GM10248 (cell line): ENCODE measurements at regions of chr5 and their contacts with region 1.

Region 1: GRCh38 chr5:151126199-151126645 is 31.4 kb downstream of the ANXA6 start:
- DNase-seq: peak; percentile 73
- CTCF ChIP-seq: peak; percentile 94

Region 2: DNA sequence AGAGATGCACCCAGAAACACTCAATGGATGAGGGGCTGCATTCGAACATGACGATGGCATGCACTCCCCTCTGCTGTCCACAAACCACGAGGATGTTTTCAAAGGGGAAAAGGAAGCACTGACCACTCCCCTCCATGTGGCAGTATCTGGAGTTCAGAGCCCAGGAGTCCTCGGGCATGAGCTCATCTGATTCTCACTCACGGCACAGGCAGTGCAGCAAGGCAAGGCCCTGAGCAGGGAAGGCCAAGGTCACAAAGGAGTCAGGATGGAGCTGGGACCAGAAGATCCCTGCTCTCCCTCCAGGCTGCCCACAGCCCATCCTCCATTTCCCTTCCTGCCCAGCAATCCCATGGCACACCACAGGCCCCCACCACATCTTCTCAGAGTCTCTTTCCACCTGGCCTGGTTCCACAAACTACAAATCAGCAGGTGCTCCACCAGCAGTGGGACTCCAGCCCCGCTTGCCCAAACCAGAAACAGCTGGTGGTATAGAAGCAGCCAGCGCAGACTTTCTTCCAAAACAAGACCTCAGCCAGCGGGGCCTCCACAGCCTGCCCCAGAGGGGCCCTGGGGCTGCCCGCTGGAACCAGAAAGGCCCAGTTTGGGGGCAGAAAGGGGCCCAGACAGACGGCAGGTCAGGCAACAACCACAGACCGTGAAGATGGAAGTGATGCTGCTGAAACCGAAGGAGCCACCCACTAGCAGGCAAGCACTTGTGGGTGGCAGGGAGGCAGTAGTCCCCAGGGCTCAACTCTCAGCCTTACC is 57.6 kb before region 1 on chr5:
- CTCF ChIA-PET with region 1: interaction called, 22 read pairs
- POLR2A ChIA-PET with region 1: no interaction called
- DNase-seq: peak; percentile 45
- CTCF ChIP-seq: no peak

Region 3: DNA sequence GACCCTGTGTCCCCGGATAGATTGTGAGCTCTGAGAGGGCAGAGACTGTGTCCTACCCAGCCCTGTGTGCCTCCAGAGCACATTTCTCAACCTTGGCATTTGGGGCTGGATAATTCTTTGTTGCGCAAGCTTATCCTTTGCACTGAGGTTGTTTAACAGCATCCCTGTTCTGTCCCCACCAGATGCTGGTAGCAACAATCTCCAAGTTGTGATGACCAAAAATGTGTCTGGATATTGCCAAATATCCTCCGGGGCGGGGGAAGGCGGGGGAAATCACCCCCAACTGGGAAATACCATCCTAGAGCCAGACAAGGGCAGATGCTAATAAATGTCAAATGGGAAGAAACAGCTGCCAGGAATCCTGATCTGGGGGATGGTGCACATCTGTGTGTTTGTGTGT is 21.4 kb before region 1 on chr5:
- CTCF ChIA-PET with region 1: interaction called, 32 read pairs
- POLR2A ChIA-PET with region 1: interaction called, 6 read pairs
- DNase-seq: no peak
- CTCF ChIP-seq: no peak

Region 4: DNA sequence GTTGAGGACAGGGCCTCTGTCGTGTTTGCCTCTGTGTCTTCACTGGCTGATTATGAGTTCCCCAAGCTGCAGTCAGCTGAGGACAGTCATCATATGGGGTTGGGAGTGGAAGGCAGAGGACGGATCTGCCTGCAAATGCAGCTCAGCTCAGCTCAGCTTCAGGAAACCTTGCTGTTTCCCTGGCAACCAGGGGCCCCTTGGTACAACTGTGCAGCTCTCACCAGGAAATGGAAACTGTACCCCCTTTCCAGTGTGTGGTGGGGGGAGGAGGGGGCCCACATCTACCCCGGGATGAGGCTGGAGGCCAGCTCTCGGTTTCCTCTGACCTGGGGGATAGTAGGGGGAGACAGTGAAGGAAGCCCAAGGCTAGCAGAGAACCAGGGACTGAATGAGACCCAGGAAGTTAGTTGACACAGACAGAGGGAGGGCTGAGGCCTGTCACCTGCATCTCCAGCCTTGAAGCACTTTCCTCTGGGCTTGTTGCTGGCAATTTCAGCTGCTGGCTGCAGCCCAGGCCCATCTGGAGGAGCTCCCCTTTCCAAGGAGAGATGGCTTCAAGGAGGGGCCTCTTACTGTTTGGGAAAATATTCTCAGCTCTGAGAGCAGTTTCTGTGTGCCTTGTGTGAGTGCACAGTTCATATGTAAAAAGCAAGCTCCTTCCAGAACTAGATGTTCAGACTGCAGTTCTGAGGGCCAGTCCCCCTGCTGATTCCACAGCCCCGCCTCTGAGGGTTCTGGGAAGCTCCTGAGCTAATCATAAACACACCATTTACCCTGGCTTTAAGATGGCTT is 24.4 kb after region 1 on chr5:
- CTCF ChIA-PET with region 1: interaction called, 221 read pairs
- POLR2A ChIA-PET with region 1: interaction called, 12 read pairs
- DNase-seq: peak; percentile 54
- CTCF ChIP-seq: no peak

Region 5: DNA sequence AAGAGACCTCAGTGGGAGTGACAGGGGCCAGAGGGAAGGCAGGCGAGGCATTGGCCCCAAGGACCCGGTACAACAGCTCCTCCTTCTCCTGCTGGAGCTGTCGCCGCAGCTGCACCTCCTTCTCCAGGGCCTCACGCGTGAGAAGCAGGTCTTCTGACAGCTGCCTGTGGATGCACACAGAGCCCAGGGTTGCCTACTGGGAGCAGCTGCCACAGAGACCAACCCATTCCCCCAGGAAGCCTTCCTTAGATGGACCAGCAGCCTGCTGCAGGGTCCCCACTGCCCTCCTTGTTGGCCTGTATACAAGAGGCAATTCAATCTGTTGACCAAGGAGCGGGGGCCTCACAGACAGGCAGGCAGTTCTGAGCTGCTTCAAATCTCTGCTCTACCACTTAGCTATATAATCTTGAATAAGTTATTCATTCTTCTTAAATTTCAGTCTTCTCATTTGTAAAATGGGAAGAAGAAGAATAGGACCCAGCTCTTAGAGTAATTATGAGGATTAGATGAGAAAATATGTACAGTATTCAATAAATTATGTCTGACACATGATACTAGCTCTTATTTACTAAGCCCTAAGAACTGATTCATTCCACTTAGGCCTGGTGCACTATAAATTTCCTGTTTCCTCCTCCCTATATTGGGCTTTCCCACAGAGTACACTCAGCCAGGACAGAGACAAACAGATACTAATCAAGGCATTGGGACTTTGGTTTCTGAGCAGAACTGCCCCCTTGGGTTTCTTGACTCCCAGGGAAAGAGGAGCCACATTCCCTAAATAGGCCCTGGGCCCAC is 57.4 kb after region 1 on chr5:
- CTCF ChIA-PET with region 1: interaction called, 12 read pairs
- POLR2A ChIA-PET with region 1: no interaction called
- DNase-seq: no peak
- CTCF ChIP-seq: no peak

Region 6: DNA sequence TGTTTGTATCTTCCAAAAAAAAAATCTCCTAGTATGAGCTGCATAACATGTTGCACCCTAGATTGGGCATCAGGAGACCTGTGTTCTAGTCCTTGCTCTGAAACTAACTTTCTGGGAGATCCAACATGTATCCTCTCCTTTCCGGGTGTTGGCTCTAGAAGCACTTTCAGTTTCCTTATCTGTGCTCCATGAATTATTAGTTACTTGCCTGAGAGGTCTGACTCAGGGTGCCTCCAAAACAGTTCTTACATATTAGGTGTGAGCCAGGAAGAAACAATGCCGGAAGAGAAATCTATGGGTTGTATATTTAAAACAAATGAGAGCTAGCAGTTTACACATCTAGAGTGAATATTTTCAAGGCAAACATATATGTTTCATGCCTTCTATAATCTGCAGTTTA is 257.9 kb after region 1 on chr5:
- CTCF ChIA-PET with region 1: no interaction called
- POLR2A ChIA-PET with region 1: no interaction called
- DNase-seq: no peak
- CTCF ChIP-seq: no peak